ENCODE measurements at regions of chr6 and their contacts with region 1.

Region 1: GRCh38 chr6:55886185-55886836 is 10.9 kb upstream of the BMP5 start:
- DNase-seq: no peak
- H3K4me3 Mint-ChIP-seq: no peak overlapping the region
- H3K27ac Mint-ChIP-seq: no peak overlapping the region
- H3K4me1 Mint-ChIP-seq: no peaks in the 10 kb centered on the region
- H3K27me3 Mint-ChIP-seq: no peaks in the 10 kb centered on the region

Region 2: GRCh38 chr6:55445648-55446204 is 440.6 kb before region 1 on chr6:
- intact Hi-C with region 1: loop called (anchors 10 kb)
- DNase-seq: no peak
- H3K4me3 Mint-ChIP-seq: no peak overlapping the region
- H3K27ac Mint-ChIP-seq: no peak overlapping the region
- H3K4me1 Mint-ChIP-seq: no peaks in the 10 kb centered on the region
- H3K27me3 Mint-ChIP-seq: no peaks in the 10 kb centered on the region

Region 3: GRCh38 chr6:55543633-55544309 is 342.5 kb before region 1 on chr6:
- intact Hi-C with region 1: no loop called
- DNase-seq: no peak
- H3K4me3 Mint-ChIP-seq: no peak overlapping the region
- H3K27ac Mint-ChIP-seq: no peak overlapping the region
- H3K4me1 Mint-ChIP-seq: no peaks in the 10 kb centered on the region
- H3K27me3 Mint-ChIP-seq: no peaks in the 10 kb centered on the region

Region 4: GRCh38 chr6:55617272-55617671 is 269.0 kb before region 1 on chr6:
- intact Hi-C with region 1: loop called (anchors 5 kb)
- DNase-seq: no peak
- H3K4me3 Mint-ChIP-seq: no peak overlapping the region
- H3K27ac Mint-ChIP-seq: no peak overlapping the region
- H3K4me1 Mint-ChIP-seq: no peaks in the 10 kb centered on the region
- H3K27me3 Mint-ChIP-seq: no peaks in the 10 kb centered on the region

Measured in activated T-helper 2 cell treated with anti-CD3 and anti-CD28 coated beads, Interferon-gamma antibody, Interleukin-2, Interleukin-4, amounts not matched to agents 10 μg/mL and 5 μg/mL and 100 μg/mL, durations not matched to agents 14 hours and 24 hours and 36 hours (primary cell).